CD14-positive monocyte (primary cell): ENCODE measurements at regions of chr19 and their contacts with region 1.

Region 1: DNA sequence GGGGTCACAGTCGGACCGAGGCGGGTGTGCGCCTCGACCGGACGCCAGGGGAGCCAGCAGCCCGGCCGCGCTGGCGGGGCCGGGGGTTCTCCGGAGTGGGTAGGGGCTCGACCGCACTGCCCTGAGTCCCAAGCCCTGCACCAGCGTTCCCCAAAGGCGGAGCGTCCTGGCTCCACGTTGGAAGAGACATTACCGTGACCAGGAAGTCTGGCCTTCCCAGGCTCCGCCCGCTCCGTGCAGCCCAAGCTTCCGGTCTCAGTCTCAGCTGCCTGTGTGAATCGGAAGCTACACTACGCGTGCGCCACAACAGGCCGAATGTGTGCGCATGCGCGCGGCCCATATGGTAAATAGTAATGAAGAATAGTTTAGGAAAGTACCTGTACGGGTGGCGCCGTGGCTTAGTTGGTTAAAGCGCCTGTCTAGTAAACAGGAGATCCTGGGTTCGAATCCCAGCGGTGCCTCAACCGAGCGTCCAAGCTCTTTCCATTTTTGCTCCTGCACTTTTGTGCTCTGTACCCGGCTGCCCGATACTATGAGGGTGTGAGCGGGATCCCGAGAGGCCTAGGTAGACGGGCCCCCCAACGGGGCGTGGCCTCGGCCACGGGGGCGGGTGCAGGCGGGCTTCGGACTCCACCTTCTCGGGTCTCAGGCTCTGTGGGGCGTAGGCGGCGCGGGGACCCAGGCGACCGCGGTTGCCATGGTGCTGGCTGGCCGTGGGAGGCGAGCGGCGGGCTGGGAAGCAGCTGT is 17.3 kb upstream of the LRP3 start:
- DNase-seq: peak; percentile 95 to 96 (median 96)
- H3K4me3 ChIP-seq: peak overlapping the region; percentile 69 to 87 (median 71)
- H3K4me3 Mint-ChIP-seq: peak overlapping the region; percentile 92 to 97
- H3K27ac ChIP-seq: peak overlapping the region; percentile 77 to 92
- H3K27ac Mint-ChIP-seq: peak overlapping the region; percentile 91 to 98 (median 95)
- H3K4me1 ChIP-seq: peaks cover 31 to 55% of the 10 kb centered on the region in 2 donors
- H3K4me1 Mint-ChIP-seq: peaks cover 36% of the 10 kb centered on the region
- H3K27me3 ChIP-seq: no peaks in the 10 kb centered on the region
- H3K27me3 Mint-ChIP-seq: no peaks in the 10 kb centered on the region
- CTCF ChIP-seq: no peak

Region 2: DNA sequence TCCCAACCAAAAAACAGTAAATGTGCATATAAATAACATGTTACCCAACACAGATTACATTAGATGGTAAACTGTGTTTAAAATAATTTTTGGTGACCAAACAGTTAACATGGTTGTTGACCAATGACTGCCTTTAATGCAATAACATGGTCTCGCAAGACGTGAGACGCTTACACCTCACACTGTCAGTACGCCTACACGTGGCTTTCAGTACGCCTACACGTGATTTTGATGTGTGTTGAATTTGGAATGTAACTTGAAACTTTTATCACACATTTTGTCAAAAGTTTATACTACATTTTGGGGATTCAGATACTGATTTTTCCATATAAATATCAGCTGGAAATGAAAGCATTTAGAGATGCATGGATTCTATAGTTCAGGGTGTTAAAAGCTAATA is 339.3 kb before region 1 on chr19:
- intact Hi-C with region 1: no loop called
- DNase-seq: no peak
- H3K4me3 ChIP-seq: no peak overlapping the region
- H3K4me3 Mint-ChIP-seq: no peak overlapping the region
- H3K27ac ChIP-seq: no peak overlapping the region
- H3K27ac Mint-ChIP-seq: no peak overlapping the region
- H3K4me1 ChIP-seq: no peaks in the 10 kb centered on the region
- H3K4me1 Mint-ChIP-seq: no peaks in the 10 kb centered on the region
- H3K27me3 ChIP-seq: no peaks in the 10 kb centered on the region
- H3K27me3 Mint-ChIP-seq: peaks cover 2 to 6% (median 3%) of the 10 kb centered on the region in 3 donors
- CTCF ChIP-seq: no peak

Region 3: GRCh38 chr19:32902448-32902847 is 274.4 kb before region 1 on chr19:
- intact Hi-C with region 1: no loop called
- DNase-seq: no peak
- H3K4me3 ChIP-seq: no peak overlapping the region
- H3K4me3 Mint-ChIP-seq: no peak overlapping the region
- H3K27ac ChIP-seq: no peak overlapping the region
- H3K27ac Mint-ChIP-seq: no peak overlapping the region
- H3K4me1 ChIP-seq: no peaks in the 10 kb centered on the region
- H3K4me1 Mint-ChIP-seq: no peaks in the 10 kb centered on the region
- H3K27me3 ChIP-seq: no peaks in the 10 kb centered on the region
- H3K27me3 Mint-ChIP-seq: no peaks in the 10 kb centered on the region
- CTCF ChIP-seq: no peak

Region 4: GRCh38 chr19:33080761-33081681 is 95.8 kb before region 1 on chr19 and contains the start of gene GPATCH1:
- intact Hi-C with region 1: loop called in 1 of 2 experiments (anchors 2 kb)
- DNase-seq: peak; percentile 66 to 81 (median 70)
- H3K4me3 ChIP-seq: peak within 1 kb of the TSS; percentile 88 to 97 (median 89)
- H3K4me3 Mint-ChIP-seq: peak within 1 kb of the TSS; percentile 93 to 94
- H3K27ac ChIP-seq: peak within 1 kb of the TSS in 1 of 2 donors; percentile 80
- H3K27ac Mint-ChIP-seq: peak within 1 kb of the TSS; percentile 87 to 95 (median 94)
- H3K4me1 ChIP-seq: peaks cover 14 to 26% of the 10 kb centered on the region in 2 donors
- H3K4me1 Mint-ChIP-seq: peaks cover 23% of the 10 kb centered on the region
- H3K27me3 ChIP-seq: no peaks in the 10 kb centered on the region
- H3K27me3 Mint-ChIP-seq: peaks cover 11 to 16% (median 11%) of the 10 kb centered on the region in 3 donors
- CTCF ChIP-seq: no peak
- polyA plus RNA-seq, gene GPATCH1: 1.4 to 6.8 (median 4.0) TPM

Region 5: DNA sequence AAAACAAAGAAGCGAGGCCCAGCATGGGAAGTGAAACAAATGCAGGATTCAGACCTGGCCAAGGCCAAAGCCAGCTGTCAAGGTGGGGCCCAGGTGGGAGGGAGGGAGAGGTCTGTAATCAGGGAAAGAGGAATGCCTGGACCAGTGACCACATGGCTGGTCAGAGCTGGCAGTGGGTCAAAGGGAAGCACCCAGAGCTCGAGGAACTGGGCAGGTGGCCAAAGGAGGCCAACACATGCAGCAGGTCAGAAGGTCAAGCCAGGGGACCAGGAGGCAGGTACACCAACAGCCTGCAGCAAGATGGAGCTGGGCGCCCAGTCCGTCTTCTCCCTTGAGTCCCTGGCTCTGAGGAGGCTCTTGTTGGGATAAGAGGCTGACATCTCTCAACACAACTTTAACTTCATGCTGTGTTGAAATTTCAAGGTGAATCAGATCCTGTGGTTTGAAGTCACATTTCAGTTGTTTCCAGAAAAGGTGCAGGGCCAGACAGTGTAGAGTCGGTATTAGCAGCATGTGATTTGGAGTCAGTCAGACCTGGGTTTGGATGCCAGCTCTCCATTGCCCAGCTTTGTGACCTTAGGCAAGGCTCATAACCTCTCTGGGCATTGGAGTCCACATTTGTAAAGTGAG is 78.7 kb before region 1 on chr19:
- intact Hi-C with region 1: no loop called
- DNase-seq: no peak
- H3K4me3 ChIP-seq: no peak overlapping the region
- H3K4me3 Mint-ChIP-seq: no peak overlapping the region
- H3K27ac ChIP-seq: no peak overlapping the region
- H3K27ac Mint-ChIP-seq: no peak overlapping the region
- H3K4me1 ChIP-seq: no peaks in the 10 kb centered on the region
- H3K4me1 Mint-ChIP-seq: no peaks in the 10 kb centered on the region
- H3K27me3 ChIP-seq: no peaks in the 10 kb centered on the region
- H3K27me3 Mint-ChIP-seq: peaks cover 0 to 4% (median 0%) of the 10 kb centered on the region in 3 donors
- CTCF ChIP-seq: no peak

Region 6: GRCh38 chr19:33161201-33161600 is 15.6 kb before region 1 on chr19:
- intact Hi-C with region 1: no loop called
- DNase-seq: no peak
- H3K4me3 ChIP-seq: no peak overlapping the region
- H3K4me3 Mint-ChIP-seq: no peak overlapping the region
- H3K27ac ChIP-seq: peak overlapping the region in 1 of 2 donors; percentile 72
- H3K27ac Mint-ChIP-seq: peak overlapping the region in 5 of 7 donors; percentile 10 to 80 (median 24)
- H3K4me1 ChIP-seq: peaks cover 12 to 47% of the 10 kb centered on the region in 2 donors
- H3K4me1 Mint-ChIP-seq: peaks cover 26% of the 10 kb centered on the region
- H3K27me3 ChIP-seq: no peaks in the 10 kb centered on the region
- H3K27me3 Mint-ChIP-seq: peaks cover 0 to 2% (median 2%) of the 10 kb centered on the region in 3 donors
- CTCF ChIP-seq: no peak

Region 7: DNA sequence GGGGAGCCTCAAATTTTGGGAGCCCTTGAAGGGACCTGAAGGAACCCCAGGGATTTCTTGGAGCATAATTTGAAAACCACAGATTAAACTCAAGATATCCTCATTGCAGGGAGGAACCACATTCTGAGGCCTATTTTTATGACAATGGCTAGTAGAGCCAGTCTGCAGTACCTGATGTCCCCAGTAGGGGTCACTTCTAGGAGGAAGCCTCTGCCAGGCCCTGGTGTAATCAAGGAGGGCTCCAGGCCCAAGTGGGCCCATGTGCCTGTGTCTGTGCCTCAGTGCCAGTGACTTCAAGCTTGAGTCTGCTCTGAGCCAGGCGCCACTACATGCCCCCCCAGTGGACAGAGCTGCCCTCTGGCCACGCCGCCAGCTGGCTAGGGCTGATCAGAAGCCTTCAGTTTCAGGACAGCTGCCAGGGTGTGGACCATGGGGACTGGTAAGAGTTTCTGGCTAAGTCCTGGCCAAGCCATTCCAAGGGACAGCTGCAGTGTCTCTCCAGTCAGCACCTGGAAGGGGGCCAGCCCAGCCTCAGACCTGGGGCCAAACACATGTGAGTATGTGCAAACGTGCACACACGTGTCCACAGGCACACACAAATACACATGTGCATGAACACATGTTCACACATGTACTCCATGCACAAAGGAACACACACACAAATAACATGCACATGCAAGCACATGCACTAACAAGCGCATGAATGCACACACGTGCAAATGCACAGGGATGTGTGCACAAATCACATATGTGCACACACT is 69.3 kb after region 1 on chr19:
- intact Hi-C with region 1: loop called in 1 of 2 experiments (anchors 5 kb)
- DNase-seq: peak in 2 of 3 donors; percentile 45 to 52
- H3K4me3 ChIP-seq: no peak overlapping the region
- H3K4me3 Mint-ChIP-seq: no peak overlapping the region
- H3K27ac ChIP-seq: no peak overlapping the region
- H3K27ac Mint-ChIP-seq: no peak overlapping the region
- H3K4me1 ChIP-seq: peaks cover 34 to 45% of the 10 kb centered on the region in 2 donors
- H3K4me1 Mint-ChIP-seq: peaks cover 29% of the 10 kb centered on the region
- H3K27me3 ChIP-seq: no peaks in the 10 kb centered on the region
- H3K27me3 Mint-ChIP-seq: peaks cover 1 to 8% (median 2%) of the 10 kb centered on the region in 3 donors
- CTCF ChIP-seq: peak; percentile 63

Region 8: DNA sequence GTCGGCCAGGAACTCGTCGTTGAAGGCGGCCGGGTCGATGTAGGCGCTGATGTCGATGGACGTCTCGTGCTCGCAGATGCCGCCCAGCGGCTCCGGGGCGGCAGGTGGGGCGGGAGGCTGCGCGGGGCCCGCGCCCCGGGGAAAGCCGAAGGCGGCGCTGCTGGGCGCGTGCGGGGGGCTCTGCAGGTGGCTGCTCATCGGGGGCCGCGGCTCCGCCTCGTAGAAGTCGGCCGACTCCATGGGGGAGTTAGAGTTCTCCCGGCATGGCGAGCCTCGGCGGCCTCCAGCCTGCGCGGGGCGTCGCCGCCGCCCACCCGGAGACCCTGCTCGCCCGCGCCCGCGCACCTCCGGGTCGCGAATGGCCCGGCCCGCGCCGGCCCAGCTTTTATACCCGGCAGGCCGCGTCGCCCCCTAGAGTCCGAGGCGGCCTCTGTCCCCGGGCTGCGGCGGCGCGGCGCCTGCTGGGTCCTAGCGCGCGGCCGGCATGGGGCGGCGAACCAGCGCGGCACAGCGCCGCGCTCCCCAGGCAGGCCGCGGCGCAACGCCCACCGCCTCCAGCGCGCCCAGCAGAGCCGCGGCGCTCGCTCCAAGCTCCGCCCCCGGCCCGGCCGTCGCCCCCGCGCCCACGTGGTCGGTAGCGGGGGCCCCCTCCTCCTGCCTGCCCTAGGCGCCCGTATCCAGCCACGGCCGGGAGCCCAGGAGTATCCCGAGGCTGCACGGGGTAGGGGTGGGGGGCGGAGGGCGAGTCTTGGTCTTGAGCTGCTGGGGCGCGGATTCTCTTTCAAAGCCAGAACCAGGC is 125.5 kb after region 1 on chr19 and contains the start of gene CEBPA:
- intact Hi-C with region 1: loop called (anchors 5 to 10 kb)
- DNase-seq: peak; percentile 85 to 91 (median 88)
- H3K4me3 ChIP-seq: peak within 1 kb of the TSS; percentile 82 to 99 (median 90)
- H3K4me3 Mint-ChIP-seq: peak within 1 kb of the TSS; percentile 89 to 95
- H3K27ac ChIP-seq: peak within 1 kb of the TSS; percentile 73 to 84
- H3K27ac Mint-ChIP-seq: peak within 1 kb of the TSS; percentile 28 to 97 (median 81)
- H3K4me1 ChIP-seq: peaks cover 42 to 49% of the 10 kb centered on the region in 2 donors
- H3K4me1 Mint-ChIP-seq: peaks cover 63% of the 10 kb centered on the region
- H3K27me3 ChIP-seq: no peaks in the 10 kb centered on the region
- H3K27me3 Mint-ChIP-seq: peaks cover 0 to 2% (median 1%) of the 10 kb centered on the region in 3 donors
- CTCF ChIP-seq: peak; percentile 62
- polyA plus RNA-seq, gene CEBPA: 17.9 to 76.3 (median 47.5) TPM

Region 9: GRCh38 chr19:34171877-34172660 is 995.2 kb after region 1 on chr19 and contains the start of gene LSM14A:
- intact Hi-C with region 1: loop called in 1 of 2 experiments (anchors 5 kb)
- DNase-seq: peak; percentile 89 to 91 (median 89)
- H3K4me3 ChIP-seq: peak within 1 kb of the TSS; percentile 79 to 93 (median 91)
- H3K4me3 Mint-ChIP-seq: peak within 1 kb of the TSS; percentile 89 to 99
- H3K27ac ChIP-seq: peak within 1 kb of the TSS; percentile 92 to 98
- H3K27ac Mint-ChIP-seq: peak within 1 kb of the TSS; percentile 94 to 99 (median 97)
- H3K4me1 ChIP-seq: peaks cover 29 to 43% of the 10 kb centered on the region in 2 donors
- H3K4me1 Mint-ChIP-seq: peaks cover 43% of the 10 kb centered on the region
- H3K27me3 ChIP-seq: no peaks in the 10 kb centered on the region
- H3K27me3 Mint-ChIP-seq: peaks cover 0 to 5% (median 0%) of the 10 kb centered on the region in 3 donors
- CTCF ChIP-seq: no peak
- polyA plus RNA-seq, gene LSM14A: 73.2 to 91.8 (median 82.7) TPM